ENCODE measurements at regions of chr5 and their contacts with region 1.

Region 1: DNA sequence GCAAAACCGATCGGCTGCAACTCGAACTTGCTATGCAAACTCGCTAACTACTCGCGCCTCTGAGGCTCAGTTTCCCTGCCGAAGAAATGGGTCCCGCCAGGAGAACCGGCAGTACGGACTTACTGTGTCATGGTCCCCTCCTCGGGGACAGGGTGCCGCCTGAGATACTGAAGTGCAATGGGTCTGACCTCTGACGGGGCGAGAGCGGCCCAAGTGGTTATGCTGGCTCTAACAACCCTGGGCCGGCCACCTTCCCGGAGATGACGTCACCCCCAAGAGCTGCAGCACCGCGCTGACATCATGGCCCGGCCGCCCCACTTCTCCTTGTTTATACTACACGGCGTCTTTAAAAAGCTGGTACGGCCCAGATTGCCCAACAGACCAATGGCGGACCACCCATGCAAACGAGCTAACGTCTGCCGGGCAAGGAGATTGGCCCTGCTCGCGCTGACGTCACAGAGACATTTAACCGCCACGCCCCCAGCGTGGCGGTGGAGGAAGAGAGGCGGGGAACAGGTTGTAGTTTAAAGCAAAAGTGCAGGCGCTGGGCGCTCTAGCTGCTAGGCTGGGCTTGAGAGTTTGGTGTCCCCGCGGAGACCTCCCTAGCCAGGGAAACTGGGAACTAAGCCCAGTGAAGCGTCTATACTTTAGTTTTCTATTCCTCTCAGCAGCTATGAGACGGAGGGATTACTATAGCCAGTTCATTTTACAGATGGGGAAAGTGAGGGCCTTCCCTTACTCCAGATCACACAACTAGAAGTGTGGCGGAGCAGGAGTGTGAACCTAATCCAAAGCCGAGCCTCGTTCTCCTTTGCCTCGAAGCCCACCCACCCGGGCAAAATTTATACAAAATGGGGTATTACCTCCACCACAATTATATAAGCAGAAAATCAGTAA is 654 bp upstream of the RNF44 start:
- DNase-seq: peak; percentile 99
- H3K4me3 ChIP-seq: peak overlapping the region; percentile 68 to 79 (median 79)
- H3K27ac ChIP-seq: peak overlapping the region; percentile 83
- H3K4me1 ChIP-seq: peaks cover 59% of the 10 kb centered on the region
- H3K27me3 ChIP-seq: no peaks in the 10 kb centered on the region
- CTCF ChIP-seq: no peak
- POLR2A ChIP-seq: no peak

Region 2: GRCh38 chr5:176361437-176362232 is 176.2 kb before region 1 on chr5 and contains the start of gene KIAA1191:
- CTCF ChIA-PET with region 1: interaction called, 3 read pairs
- POLR2A ChIA-PET with region 1: interaction called, 4 read pairs
- dilution Hi-C with region 1: no loop called
- intact Hi-C with region 1: loop called (anchors 2 kb)
- DNase-seq: peak; percentile 94
- H3K4me3 ChIP-seq: peak within 1 kb of the TSS; percentile 83 to 99 (median 92)
- H3K27ac ChIP-seq: peak within 1 kb of the TSS; percentile 67
- H3K4me1 ChIP-seq: peaks cover 13% of the 10 kb centered on the region
- H3K27me3 ChIP-seq: no peaks in the 10 kb centered on the region
- CTCF ChIP-seq: no peak
- POLR2A ChIP-seq: peak; percentile 98
- total RNA-seq, gene KIAA1191: 116 and 119 TPM in 2 replicates

Region 3: GRCh38 chr5:176388444-176389134 is 149.3 kb before region 1 on chr5 and contains the starts of genes HIGD2A and NOP16:
- CTCF ChIA-PET with region 1: interaction called, 3 read pairs
- POLR2A ChIA-PET with region 1: interaction called, 4 read pairs
- dilution Hi-C with region 1: no loop called
- intact Hi-C with region 1: loop called (anchors 1 kb)
- DNase-seq: peak; percentile 98
- H3K4me3 ChIP-seq: peak within 1 kb of the TSS; percentile 64 to 85 (median 65)
- H3K27ac ChIP-seq: peak within 1 kb of the TSS; percentile 79
- H3K4me1 ChIP-seq: peaks cover 14% of the 10 kb centered on the region
- H3K27me3 ChIP-seq: no peaks in the 10 kb centered on the region
- CTCF ChIP-seq: no peak
- POLR2A ChIP-seq: peak; percentile 74
- total RNA-seq, gene HIGD2A: 96.2 and 103 TPM in 2 replicates
- total RNA-seq, gene NOP16: 47.4 and 51.6 TPM in 2 replicates

Region 4: DNA sequence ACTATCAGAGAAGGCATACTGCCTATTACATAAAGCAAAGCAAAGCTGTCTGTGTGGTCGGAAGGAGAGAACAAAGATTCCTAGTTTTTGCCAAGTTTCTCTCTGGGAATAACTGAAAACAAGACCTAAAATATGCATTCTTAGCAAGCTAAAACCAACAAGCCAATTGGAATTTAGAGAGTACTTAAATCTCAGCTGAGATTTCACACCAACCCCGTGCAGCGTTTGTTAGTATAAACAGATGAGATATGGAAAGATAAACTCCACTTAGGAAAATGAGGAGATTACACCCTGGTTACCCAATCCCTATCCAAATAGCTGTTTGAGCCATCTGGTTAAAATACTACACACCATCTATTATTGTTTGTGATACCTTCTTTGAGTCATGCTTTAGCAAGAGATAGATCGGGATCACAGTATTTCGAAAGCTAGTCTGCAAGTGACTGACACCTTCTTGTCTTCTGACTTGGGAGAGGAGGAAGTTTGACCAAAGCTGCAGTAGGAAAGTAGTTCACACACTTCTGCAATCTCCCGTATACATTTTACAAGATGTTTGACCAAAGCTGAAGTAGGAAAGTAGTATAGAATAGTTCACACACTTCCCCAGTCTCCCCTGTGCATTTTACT is 71.5 kb before region 1 on chr5:
- CTCF ChIA-PET with region 1: no interaction called
- POLR2A ChIA-PET with region 1: no interaction called
- dilution Hi-C with region 1: no loop called
- intact Hi-C with region 1: no loop called
- DNase-seq: peak; percentile 40
- H3K4me3 ChIP-seq: no peak overlapping the region
- H3K27ac ChIP-seq: no peak overlapping the region
- H3K4me1 ChIP-seq: no peaks in the 10 kb centered on the region
- H3K27me3 ChIP-seq: no peaks in the 10 kb centered on the region
- CTCF ChIP-seq: no peak
- POLR2A ChIP-seq: no peak

Region 5: DNA sequence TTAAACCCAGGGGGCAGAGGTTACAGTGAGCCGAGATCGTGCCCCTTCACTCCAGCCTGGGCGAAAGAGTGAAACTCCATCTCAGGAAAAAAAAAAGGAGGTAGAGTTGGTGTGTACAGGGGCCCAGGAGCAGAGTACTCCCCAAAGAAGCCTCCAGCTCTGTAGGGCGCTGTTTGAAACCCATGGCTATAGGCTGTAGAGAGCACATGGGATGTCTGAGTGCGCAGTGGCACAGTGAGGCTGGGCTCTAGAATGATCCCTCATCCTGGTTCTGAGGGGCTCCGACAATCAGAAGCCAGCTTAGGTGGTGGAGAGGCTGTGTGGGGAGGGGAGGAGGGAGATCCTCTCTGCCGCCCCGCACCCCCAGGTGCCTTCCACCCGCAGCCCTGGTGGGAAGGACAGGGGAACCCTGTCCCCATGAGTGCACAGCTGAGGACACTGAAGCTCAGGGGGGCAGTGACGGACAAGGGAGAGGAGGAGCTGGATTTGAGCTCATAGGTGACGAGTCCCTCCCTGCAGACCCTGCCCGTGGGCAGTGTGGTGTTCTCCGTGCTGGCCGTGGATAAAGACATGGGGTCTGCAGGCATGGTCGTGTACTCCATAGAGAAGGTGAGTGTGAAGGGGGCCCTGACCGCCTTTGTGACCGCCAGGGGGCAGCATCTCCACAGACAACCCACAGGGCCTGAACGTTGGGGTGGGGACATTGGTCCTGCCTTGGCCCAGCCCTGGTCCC is 35.9 kb after region 1 on chr5:
- CTCF ChIA-PET with region 1: interaction called, 10 read pairs
- POLR2A ChIA-PET with region 1: no interaction called
- dilution Hi-C with region 1: no loop called
- intact Hi-C with region 1: no loop called
- DNase-seq: peak; percentile 45
- H3K4me3 ChIP-seq: no peak overlapping the region
- H3K27ac ChIP-seq: no peak overlapping the region
- H3K4me1 ChIP-seq: no peaks in the 10 kb centered on the region
- H3K27me3 ChIP-seq: no peaks in the 10 kb centered on the region
- CTCF ChIP-seq: peak; percentile 74 to 91
- POLR2A ChIP-seq: no peak

Region 6: GRCh38 chr5:176619203-176619568 is 81.3 kb after region 1 on chr5:
- CTCF ChIA-PET with region 1: interaction called, 3 read pairs
- POLR2A ChIA-PET with region 1: no interaction called
- dilution Hi-C with region 1: no loop called
- intact Hi-C with region 1: loop called (anchors 2 kb)
- DNase-seq: peak; percentile 87
- H3K4me3 ChIP-seq: no peak overlapping the region
- H3K27ac ChIP-seq: no peak overlapping the region
- H3K4me1 ChIP-seq: peaks cover 21% of the 10 kb centered on the region
- H3K27me3 ChIP-seq: peaks cover 29 to 30% of the 10 kb centered on the region in 2 experiments
- CTCF ChIP-seq: peak; percentile 47 to 66
- POLR2A ChIP-seq: no peak

Region 7: DNA sequence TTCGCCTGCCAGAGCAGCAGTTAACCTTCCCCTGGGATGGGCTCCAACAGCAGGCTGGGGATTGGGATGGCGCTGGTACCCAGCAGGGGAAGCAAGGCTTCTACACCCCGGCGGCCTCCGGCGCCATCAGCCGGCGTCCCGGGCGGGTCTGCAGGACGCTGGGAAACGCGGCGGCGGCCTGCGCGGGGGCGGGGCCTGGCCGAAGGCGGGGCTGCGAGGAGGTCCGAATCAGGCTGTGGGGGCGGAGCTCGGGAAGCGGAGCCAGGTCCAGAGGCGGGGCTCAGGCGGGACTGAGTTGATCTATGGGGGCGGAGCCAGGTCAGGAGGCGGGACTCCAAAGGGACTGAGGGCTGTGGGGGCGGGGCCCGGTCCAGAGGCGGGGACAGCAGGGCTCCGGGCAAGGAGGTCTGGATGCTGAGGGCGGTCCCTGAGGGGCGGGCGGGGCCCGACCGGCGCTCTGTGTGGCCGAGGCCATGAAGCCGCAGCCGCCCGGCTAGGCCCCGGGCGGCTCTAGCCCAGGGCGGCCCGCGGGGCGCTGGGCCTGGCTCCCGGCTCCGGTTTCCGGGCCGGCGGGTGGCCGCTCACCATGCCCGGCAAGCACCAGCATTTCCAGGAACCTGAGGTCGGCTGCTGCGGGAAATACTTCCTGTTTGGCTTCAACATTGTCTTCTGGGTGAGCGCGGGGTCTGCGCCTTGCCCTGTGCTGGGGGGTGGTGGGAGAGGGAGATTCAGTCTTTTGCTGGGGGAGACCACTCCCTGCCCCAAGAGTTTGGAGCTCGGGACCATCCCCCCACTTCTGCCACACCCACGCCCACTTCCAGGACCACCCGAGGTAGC is 109.4 kb after region 1 on chr5 and contains the start of gene TSPAN17:
- CTCF ChIA-PET with region 1: interaction called, 4 read pairs
- POLR2A ChIA-PET with region 1: interaction called, 4 read pairs
- dilution Hi-C with region 1: no loop called
- intact Hi-C with region 1: loop called (anchors 1 kb)
- DNase-seq: peak; percentile 99
- H3K4me3 ChIP-seq: peak within 1 kb of the TSS; percentile 29 to 51 (median 50)
- H3K27ac ChIP-seq: peak within 1 kb of the TSS; percentile 0
- H3K4me1 ChIP-seq: peaks cover 12% of the 10 kb centered on the region
- H3K27me3 ChIP-seq: no peaks in the 10 kb centered on the region
- CTCF ChIP-seq: peak in 1 of 2 donors; percentile 10
- POLR2A ChIP-seq: peak; percentile 98
- total RNA-seq, gene TSPAN17: 55.9 and 57.0 TPM in 2 replicates

Region 8: DNA sequence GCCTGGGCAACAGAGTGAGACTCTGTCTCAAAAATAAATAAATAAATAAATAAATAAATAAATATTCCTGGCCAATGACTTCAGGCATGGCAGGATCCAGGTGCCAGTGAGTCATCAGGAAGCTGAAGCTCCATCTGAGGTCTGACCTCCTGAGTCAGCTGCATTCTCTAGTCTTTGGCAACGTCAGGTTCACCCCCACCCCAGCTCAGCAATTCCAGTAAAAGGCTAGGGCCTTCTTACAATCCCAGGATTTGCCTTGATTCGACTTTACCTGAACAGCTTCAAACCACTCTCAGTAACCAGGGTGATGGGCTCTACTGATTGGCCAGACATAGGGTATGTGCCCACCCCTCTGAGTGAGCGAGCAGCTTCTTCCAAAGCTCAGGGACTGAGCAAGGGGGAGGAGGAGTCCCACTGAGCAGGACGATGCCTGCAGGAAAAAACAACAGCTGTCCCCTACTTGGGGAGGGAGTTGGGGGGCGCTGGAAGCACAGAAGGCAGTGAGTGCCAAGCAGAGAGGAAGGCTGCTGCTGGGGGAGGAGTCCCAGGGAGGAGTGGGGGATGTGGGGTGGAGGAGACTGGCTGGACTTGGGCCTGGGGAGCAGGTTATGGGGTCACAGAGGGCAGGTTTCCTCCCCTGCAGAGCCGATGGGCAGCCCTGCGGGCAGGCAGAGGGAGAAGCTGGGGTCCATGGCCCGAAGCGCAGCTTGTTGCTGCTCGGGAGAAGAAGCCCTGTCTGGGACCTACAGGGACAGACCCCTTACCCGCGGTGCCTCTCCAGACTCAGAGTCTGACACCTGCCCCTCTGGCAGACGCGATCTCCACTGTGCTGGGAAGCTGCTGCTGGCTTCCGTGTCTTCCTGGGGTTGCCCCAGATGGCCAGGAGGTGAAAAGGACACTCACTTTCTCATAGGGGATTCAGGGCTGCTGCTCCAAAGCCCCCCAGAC is 246.6 kb after region 1 on chr5:
- CTCF ChIA-PET with region 1: no interaction called
- POLR2A ChIA-PET with region 1: no interaction called
- dilution Hi-C with region 1: no loop called
- intact Hi-C with region 1: no loop called
- DNase-seq: peak; percentile 74
- H3K4me3 ChIP-seq: no peak overlapping the region
- H3K27ac ChIP-seq: peak overlapping the region; percentile 48
- H3K4me1 ChIP-seq: peaks cover 15% of the 10 kb centered on the region
- H3K27me3 ChIP-seq: peaks cover 10 to 11% of the 10 kb centered on the region in 2 experiments
- CTCF ChIP-seq: no peak
- POLR2A ChIP-seq: no peak

Region 9: GRCh38 chr5:176901260-176902101 is 363.6 kb after region 1 on chr5:
- CTCF ChIA-PET with region 1: no interaction called
- POLR2A ChIA-PET with region 1: no interaction called
- dilution Hi-C with region 1: no loop called
- intact Hi-C with region 1: no loop called
- DNase-seq: no peak
- H3K4me3 ChIP-seq: no peak overlapping the region
- H3K27ac ChIP-seq: no peak overlapping the region
- H3K4me1 ChIP-seq: peaks cover 11% of the 10 kb centered on the region
- H3K27me3 ChIP-seq: no peaks in the 10 kb centered on the region
- CTCF ChIP-seq: no peak
- POLR2A ChIP-seq: no peak

Region 10: DNA sequence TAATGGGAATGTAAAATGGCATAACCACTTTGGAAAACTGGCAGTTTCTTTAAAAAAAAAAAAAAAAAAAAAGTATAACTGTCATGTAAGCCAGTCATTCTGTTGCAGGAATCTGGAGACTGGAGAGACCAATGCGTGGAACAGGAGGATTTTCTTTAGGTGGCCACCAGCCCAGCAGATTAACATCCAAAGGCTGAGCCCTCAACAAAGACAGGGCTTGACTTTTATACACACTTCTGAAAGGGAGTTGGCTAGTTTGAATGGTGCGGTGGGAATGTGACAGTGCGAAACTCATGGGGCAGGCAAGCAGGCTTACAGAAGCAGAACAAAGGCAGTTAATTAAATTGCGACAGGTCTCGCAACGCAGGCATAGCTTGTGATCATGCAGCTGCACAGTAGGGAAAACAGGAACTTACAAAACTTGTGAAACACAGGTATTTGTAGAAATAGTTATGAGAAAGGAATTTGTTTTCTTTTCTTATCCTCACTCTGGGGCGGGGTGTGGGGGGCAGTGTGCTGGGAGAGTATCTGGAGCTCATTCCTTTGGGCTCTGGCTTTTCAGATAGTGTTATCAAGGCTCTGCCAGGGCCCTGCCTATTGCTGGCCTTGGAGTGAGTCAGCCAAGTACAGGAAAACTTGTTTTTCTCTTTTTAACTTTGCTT is 456.7 kb after region 1 on chr5:
- CTCF ChIA-PET with region 1: no interaction called
- POLR2A ChIA-PET with region 1: interaction called, 6 read pairs
- dilution Hi-C with region 1: no loop called
- intact Hi-C with region 1: loop called (anchors 10 kb)
- DNase-seq: peak; percentile 98
- H3K4me3 ChIP-seq: no peak overlapping the region
- H3K27ac ChIP-seq: peak overlapping the region; percentile 92
- H3K4me1 ChIP-seq: peaks cover 37% of the 10 kb centered on the region
- H3K27me3 ChIP-seq: no peaks in the 10 kb centered on the region
- CTCF ChIP-seq: no peak
- POLR2A ChIP-seq: peak; percentile 69